ENCODE measurements at regions of chr22 and their contacts with region 1.

Region 1: GRCh38 chr22:30386960-30387827 is at the start of gene RNF215:
- DNase-seq: peak; percentile 54
- ATAC-seq: peak; percentile 71
- H3K4me3 ChIP-seq: peak within 1 kb of the TSS; percentile 49 to 71 (median 64); a peak in 5 of 6 replicates
- H3K27ac ChIP-seq: no peak within 1 kb of the TSS
- H3K4me1 ChIP-seq: peaks cover 21% of the 10 kb centered on the region
- H3K27me3 ChIP-seq: no peaks in the 10 kb centered on the region
- CTCF ChIP-seq: peak; percentile 89
- EP300 ChIP-seq: no peak
- POLR2A ChIP-seq: no peak; a peak in 1 of 4 replicates
- RAD21 ChIP-seq: peak; percentile 90
- total RNA-seq, gene RNF215: 2.4 and 5.3 TPM in 2 replicates

Region 2: DNA sequence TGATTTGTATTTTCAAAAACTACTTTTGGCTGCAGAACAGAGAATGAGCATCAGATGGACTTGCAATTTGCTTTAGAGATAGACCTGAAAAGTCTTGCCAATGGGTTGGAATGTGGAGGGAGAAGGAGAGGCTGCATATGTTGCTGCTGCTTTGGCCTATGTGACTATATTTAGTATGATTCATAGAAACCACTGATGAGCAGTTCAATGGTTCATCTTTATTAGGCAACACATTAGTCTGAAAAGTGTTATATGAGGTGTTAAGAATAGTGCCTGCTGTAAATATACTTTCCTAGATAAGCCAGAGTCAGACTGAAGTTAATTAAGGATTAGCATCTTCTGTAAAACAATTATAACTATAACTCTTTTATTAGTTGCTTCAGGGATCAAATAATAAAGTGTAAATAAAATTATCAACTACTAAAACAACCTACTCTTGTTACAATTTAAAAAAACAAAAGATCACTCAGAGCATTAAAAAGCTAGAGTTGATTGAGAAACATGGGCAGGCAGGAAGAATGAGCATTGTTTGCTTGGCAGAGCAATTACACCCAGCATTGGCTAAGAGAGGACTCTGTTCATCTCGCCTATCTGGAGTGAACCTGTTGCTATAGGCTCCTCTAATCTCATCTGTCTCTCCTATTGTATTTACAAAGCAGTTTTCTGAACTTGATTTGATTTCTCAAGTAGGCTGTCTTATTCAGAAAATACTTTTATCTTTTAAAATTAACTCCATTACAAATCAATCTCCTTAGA is 270.7 kb before region 1 on chr22:
- CTCF ChIA-PET with region 1: no interaction called
- POLR2A ChIA-PET with region 1: no interaction called
- in situ Hi-C with region 1: loop called (anchors 25 kb)
- intact Hi-C with region 1: no loop called
- DNase-seq: peak; percentile 52
- ATAC-seq: peak; percentile 75
- H3K4me3 ChIP-seq: no peak overlapping the region
- H3K27ac ChIP-seq: no peak overlapping the region
- H3K4me1 ChIP-seq: peaks cover 24% of the 10 kb centered on the region
- H3K27me3 ChIP-seq: no peaks in the 10 kb centered on the region; a peak in 1 of 5 replicates
- CTCF ChIP-seq: no peak
- EP300 ChIP-seq: no peak
- POLR2A ChIP-seq: no peak
- RAD21 ChIP-seq: no peak

Region 3: GRCh38 chr22:30262917-30263741 is 124.1 kb before region 1 on chr22:
- CTCF ChIA-PET with region 1: interaction called, 8 read pairs
- POLR2A ChIA-PET with region 1: no interaction called
- in situ Hi-C with region 1: loop called (anchors 5 kb)
- intact Hi-C with region 1: no loop called
- DNase-seq: peak; percentile 64
- ATAC-seq: peak; percentile 62
- H3K4me3 ChIP-seq: peak overlapping the region; percentile 31 to 63 (median 36)
- H3K27ac ChIP-seq: no peak overlapping the region
- H3K4me1 ChIP-seq: peaks cover 32% of the 10 kb centered on the region
- H3K27me3 ChIP-seq: peaks cover 12 to 43% of the 10 kb centered on the region in 2 experiments
- CTCF ChIP-seq: peak; percentile 78
- EP300 ChIP-seq: no peak
- POLR2A ChIP-seq: no peak
- RAD21 ChIP-seq: peak; percentile 52

Region 4: DNA sequence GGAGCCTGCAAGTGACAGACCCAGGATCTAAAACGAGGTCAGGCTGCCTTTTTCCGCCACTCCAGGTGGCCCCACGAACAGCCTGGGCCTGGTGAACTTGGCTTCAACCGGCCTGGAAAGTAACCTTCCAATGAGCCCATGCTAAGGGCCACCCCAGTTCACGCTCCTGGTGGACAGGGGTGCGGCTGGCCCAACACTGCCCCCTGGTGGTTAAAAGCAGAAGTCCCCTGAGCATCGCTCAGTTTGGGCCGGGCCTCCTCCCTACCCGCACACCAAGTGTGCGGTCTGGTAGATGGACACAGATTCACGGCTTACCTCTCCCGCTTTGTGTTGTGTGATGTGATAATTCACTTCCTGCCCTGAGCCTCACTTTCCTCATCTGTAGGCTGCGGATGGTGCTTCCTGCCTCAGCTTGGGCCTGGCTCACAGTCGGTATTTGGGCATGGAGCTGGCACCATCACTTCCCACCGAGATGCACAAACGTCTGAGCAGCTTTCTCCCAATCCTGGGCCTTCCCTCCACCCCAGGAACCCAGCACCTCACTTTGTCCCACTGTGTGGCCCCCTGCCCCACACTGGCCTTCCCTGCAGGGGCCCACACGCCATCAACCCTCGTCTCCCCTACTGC is 98.3 kb after region 1 on chr22:
- CTCF ChIA-PET with region 1: interaction called, 29 read pairs
- POLR2A ChIA-PET with region 1: no interaction called
- in situ Hi-C with region 1: loop called (anchors 5 kb)
- intact Hi-C with region 1: loop called (anchors 1 kb)
- DNase-seq: peak; percentile 34
- ATAC-seq: peak; percentile 97
- H3K4me3 ChIP-seq: no peak overlapping the region
- H3K27ac ChIP-seq: no peak overlapping the region
- H3K4me1 ChIP-seq: no peaks in the 10 kb centered on the region
- H3K27me3 ChIP-seq: peaks cover 0 to under 1% of the 10 kb centered on the region in 2 experiments; a peak in 2 of 5 replicates
- CTCF ChIP-seq: peak; percentile 97
- EP300 ChIP-seq: no peak
- POLR2A ChIP-seq: no peak
- RAD21 ChIP-seq: peak; percentile 90

Measured in HepG2 (cell line).